Calu3 (cell line): ENCODE measurements at regions of chr2 and their contacts with region 1.

Region 1: GRCh38 chr2:147910990-147911473 is 66.2 kb downstream of the ACVR2A start:
- DNase-seq: peak; percentile 43
- H3K4me3 Mint-ChIP-seq: no peak overlapping the region
- H3K27ac Mint-ChIP-seq: no peak overlapping the region
- H3K4me1 Mint-ChIP-seq: peaks cover 13% of the 10 kb centered on the region
- H3K27me3 Mint-ChIP-seq: no peaks in the 10 kb centered on the region
- CTCF ChIP-seq: no peak

Region 2: GRCh38 chr2:146734042-146734820 is 1176.8 kb before region 1 on chr2:
- CTCF ChIA-PET with region 1: interaction called, 5 read pairs
- intact Hi-C with region 1: loop called (anchors 1 kb)
- DNase-seq: peak; percentile 16
- H3K4me3 Mint-ChIP-seq: no peak overlapping the region
- H3K27ac Mint-ChIP-seq: no peak overlapping the region
- H3K4me1 Mint-ChIP-seq: no peaks in the 10 kb centered on the region
- H3K27me3 Mint-ChIP-seq: no peaks in the 10 kb centered on the region
- CTCF ChIP-seq: peak; percentile 49

Region 3: DNA sequence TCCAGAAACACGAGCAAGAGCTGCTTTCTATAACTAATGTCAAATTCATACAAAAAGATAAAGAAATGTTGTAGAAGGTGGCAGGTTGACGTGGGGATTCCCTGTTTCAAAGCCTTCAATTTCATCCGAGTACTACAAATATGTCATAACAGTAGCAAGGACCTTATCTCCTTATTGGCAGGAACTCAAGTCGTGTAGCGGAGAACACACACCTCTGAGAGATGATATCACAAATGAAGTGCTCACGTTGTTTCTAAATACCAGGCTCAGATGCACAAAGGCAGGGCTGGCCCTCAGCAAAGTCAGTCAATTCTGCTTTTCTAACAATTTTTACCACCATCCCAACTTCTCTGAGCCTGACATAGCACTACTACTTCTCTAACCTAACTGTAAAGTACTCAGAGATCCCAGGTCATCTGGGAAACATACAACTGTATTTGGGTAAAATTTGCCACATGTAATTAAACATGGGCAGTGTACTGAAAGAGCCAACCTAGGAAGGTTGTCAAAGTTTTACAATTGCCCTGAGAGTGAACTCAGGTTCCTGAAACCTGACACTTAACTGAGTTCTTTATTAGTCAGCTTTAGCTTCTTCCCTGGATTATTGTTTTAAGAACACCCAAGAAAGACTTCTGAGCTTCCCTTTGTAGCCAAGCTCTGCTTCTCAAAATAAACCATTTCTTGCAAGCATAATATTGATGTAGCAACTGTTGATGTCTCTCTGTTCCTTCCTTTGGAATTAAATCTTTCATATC is 879.9 kb before region 1 on chr2:
- CTCF ChIA-PET with region 1: interaction called, 3 read pairs
- intact Hi-C with region 1: loop called (anchors 5 kb)
- DNase-seq: peak; percentile 36
- H3K4me3 Mint-ChIP-seq: peak overlapping the region; percentile 64
- H3K27ac Mint-ChIP-seq: peak overlapping the region; percentile 79
- H3K4me1 Mint-ChIP-seq: peaks cover 71% of the 10 kb centered on the region
- H3K27me3 Mint-ChIP-seq: no peaks in the 10 kb centered on the region
- CTCF ChIP-seq: no peak

Region 4: GRCh38 chr2:147082850-147083522 is 828.0 kb before region 1 on chr2:
- CTCF ChIA-PET with region 1: interaction called, 12 read pairs
- intact Hi-C with region 1: loop called (anchors 1 kb)
- DNase-seq: peak; percentile 68
- H3K4me3 Mint-ChIP-seq: no peak overlapping the region
- H3K27ac Mint-ChIP-seq: no peak overlapping the region
- H3K4me1 Mint-ChIP-seq: peaks cover 16% of the 10 kb centered on the region
- H3K27me3 Mint-ChIP-seq: no peaks in the 10 kb centered on the region
- CTCF ChIP-seq: peak; percentile 76

Region 5: DNA sequence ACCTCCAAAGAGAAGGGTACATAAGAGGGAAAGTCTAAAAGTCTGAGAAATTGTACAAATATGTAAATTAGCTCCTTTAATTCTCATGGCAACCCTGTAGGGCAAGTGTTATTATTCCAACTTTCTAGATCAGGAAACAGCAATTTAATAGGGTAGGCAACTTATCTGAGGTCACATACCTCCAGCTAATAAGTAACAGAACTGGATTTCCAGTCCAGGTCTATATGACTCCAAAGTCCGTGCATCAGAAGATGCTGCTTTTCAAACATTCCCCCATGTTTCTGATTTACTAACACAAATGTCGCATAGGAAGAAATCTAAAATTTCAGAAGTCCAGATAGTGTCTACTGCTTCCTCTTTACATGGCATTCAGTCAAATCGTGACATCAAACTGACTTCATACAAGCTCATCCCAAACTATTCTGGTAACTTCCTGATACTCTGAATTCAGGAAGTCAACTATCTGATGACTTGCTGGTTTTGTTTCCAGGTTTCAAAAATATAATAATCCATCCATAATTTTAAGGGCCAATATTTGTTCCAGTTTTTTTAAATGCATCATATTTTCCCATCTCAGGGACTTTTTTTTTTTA is 485.5 kb before region 1 on chr2:
- CTCF ChIA-PET with region 1: no interaction called
- intact Hi-C with region 1: loop called (anchors 10 kb)
- DNase-seq: no peak
- H3K4me3 Mint-ChIP-seq: peak overlapping the region; percentile 15
- H3K27ac Mint-ChIP-seq: peak overlapping the region; percentile 42
- H3K4me1 Mint-ChIP-seq: peaks cover 65% of the 10 kb centered on the region
- H3K27me3 Mint-ChIP-seq: no peaks in the 10 kb centered on the region
- CTCF ChIP-seq: no peak